ENCODE measurements at regions of chr2 and their contacts with region 1.

Region 1: DNA sequence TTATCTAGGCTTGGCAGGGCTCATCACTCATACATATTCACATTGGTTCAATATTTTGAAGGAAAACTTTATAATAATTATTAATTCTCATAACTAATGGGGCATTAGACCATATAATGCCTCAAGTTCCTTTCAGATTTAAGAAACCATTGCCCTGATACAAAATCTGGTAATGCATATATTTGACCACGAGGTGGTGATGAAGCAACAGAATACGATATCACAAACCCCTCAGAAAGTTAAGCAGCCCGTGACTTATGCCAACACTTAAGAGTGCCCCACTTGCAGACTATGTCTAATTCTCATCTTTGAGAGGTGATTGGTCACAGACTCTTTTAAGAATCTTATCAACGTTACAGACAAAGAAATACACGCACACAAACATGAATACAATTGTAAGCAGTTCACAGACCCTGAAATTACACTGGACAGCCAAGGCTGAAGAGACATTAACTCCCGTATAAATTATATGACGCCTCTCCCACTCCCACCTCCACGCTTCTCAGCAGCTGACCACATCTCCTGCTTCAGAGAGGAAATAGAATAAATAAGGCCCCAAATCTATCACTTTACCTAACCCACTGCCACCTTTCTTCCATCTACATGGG is 20.7 kb upstream of the DNAH6 start:
- DNase-seq: peak; percentile 31 to 54 (median 49)
- H3K4me3 ChIP-seq: no peak overlapping the region
- H3K4me3 Mint-ChIP-seq: no peak overlapping the region
- H3K27ac ChIP-seq: no peak overlapping the region
- H3K27ac Mint-ChIP-seq: no peak overlapping the region
- H3K4me1 ChIP-seq: no peaks in the 10 kb centered on the region
- H3K4me1 Mint-ChIP-seq: peaks cover 4% of the 10 kb centered on the region
- H3K27me3 ChIP-seq: no peaks in the 10 kb centered on the region
- H3K27me3 Mint-ChIP-seq: peaks cover 0 to 7% (median 5%) of the 10 kb centered on the region in 3 donors
- CTCF ChIP-seq: peak; percentile 79

Region 2: GRCh38 chr2:84450288-84451227 is 45.1 kb before region 1 on chr2:
- intact Hi-C with region 1: no loop called
- DNase-seq: peak in 1 of 3 donors; percentile 5
- H3K4me3 ChIP-seq: no peak overlapping the region
- H3K4me3 Mint-ChIP-seq: no peak overlapping the region
- H3K27ac ChIP-seq: peak overlapping the region in 1 of 2 donors; percentile 69
- H3K27ac Mint-ChIP-seq: peak overlapping the region in 6 of 7 donors; percentile 12 to 63 (median 34)
- H3K4me1 ChIP-seq: peaks cover 8 to 15% of the 10 kb centered on the region in 2 donors
- H3K4me1 Mint-ChIP-seq: peaks cover 21% of the 10 kb centered on the region
- H3K27me3 ChIP-seq: no peaks in the 10 kb centered on the region
- H3K27me3 Mint-ChIP-seq: no peaks in the 10 kb centered on the region
- CTCF ChIP-seq: no peak

Region 3: GRCh38 chr2:84757648-84758047 is 262.0 kb after region 1 on chr2:
- intact Hi-C with region 1: no loop called
- DNase-seq: no peak
- H3K4me3 ChIP-seq: no peak overlapping the region
- H3K4me3 Mint-ChIP-seq: no peak overlapping the region
- H3K27ac ChIP-seq: no peak overlapping the region
- H3K27ac Mint-ChIP-seq: no peak overlapping the region
- H3K4me1 ChIP-seq: no peaks in the 10 kb centered on the region
- H3K4me1 Mint-ChIP-seq: no peaks in the 10 kb centered on the region
- H3K27me3 ChIP-seq: no peaks in the 10 kb centered on the region
- H3K27me3 Mint-ChIP-seq: peaks cover 0 to 6% (median 3%) of the 10 kb centered on the region in 3 donors
- CTCF ChIP-seq: no peak

Region 4: DNA sequence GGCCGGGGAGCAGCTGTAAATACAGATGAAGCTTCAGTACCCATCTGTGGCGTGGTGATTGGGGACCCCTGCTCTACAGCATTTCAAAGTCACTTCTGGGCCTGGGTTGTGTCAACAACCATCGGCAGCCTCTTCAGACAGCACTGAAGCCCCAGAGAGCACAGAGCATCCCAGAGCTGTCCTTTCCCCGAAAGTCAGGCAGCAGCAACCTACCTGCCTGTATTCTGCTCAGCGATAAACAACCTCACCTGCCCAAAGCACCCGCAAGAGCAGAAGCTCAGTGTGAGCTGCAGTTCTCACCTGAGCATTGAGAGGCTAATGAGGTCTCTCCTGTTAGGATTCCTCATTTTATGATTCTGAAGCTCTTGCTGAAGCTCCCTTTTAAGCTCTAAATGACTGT is 365.9 kb after region 1 on chr2:
- intact Hi-C with region 1: loop called in 1 of 2 experiments (anchors 5 kb)
- DNase-seq: no peak
- H3K4me3 ChIP-seq: no peak overlapping the region
- H3K4me3 Mint-ChIP-seq: no peak overlapping the region
- H3K27ac ChIP-seq: no peak overlapping the region
- H3K27ac Mint-ChIP-seq: no peak overlapping the region
- H3K4me1 ChIP-seq: peaks cover 16 to 19% of the 10 kb centered on the region in 2 donors
- H3K4me1 Mint-ChIP-seq: peaks cover 31% of the 10 kb centered on the region
- H3K27me3 ChIP-seq: no peaks in the 10 kb centered on the region
- H3K27me3 Mint-ChIP-seq: peaks cover 0 to 4% (median 2%) of the 10 kb centered on the region in 3 donors
- CTCF ChIP-seq: no peak

Region 5: DNA sequence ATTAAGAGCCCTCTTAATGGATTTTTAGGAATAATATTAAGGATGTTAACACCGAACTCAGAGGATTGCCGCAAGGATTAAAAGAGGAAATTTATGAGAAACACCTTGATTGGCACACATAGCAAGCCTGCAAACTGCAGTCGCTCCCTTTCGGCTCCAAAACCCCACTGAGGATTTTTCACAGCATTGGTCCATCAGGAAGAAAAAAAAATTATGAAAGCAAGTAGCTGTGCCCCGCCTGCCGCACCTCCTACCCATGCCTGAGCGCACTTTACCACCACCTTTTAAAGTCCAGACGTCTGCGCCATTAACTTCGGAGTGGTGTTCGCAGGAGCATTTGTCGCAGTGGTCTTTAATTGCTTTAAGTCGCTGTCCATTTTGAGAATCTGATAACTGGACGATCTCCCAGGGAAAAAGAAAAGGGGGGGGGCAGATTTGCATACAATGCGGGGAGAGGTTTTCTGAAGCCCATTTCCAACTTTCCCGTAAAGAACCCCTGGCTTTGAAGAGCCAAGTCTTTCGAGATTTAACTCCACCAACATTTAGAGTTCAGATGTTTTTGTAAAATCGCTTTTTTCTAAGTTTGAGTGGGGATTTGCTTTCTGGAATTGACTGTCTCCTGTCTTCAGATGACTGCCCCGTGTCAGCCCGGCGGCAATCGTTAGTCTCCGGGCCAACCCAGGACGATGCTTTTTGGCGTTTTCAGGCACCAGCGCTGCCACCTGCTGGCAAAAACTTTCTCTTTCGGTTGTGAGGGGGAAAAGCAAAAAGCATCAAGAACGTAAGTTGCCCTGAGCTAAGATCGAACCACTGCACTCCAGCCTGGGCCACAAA is 386.2 kb after region 1 on chr2:
- intact Hi-C with region 1: loop called in 1 of 2 experiments (anchors 5 kb)
- DNase-seq: peak; percentile 58 to 67 (median 63)
- H3K4me3 ChIP-seq: peak overlapping the region; percentile 27 to 77 (median 45)
- H3K4me3 Mint-ChIP-seq: peak overlapping the region; percentile 89 to 99
- H3K27ac ChIP-seq: no peak overlapping the region
- H3K27ac Mint-ChIP-seq: peak overlapping the region in 1 of 7 donors; percentile 32
- H3K4me1 ChIP-seq: peaks cover 22 to 27% of the 10 kb centered on the region in 2 donors
- H3K4me1 Mint-ChIP-seq: peaks cover 30% of the 10 kb centered on the region
- H3K27me3 ChIP-seq: peaks cover 23 to 34% of the 10 kb centered on the region in 2 donors
- H3K27me3 Mint-ChIP-seq: peaks cover 44 to 56% (median 54%) of the 10 kb centered on the region in 3 donors
- CTCF ChIP-seq: peak; percentile 80